Right ventricle myocardium superior (tissue), 1 donor: ENCODE measurements at regions of chr21 and their contacts with region 1.

Region 1: DNA sequence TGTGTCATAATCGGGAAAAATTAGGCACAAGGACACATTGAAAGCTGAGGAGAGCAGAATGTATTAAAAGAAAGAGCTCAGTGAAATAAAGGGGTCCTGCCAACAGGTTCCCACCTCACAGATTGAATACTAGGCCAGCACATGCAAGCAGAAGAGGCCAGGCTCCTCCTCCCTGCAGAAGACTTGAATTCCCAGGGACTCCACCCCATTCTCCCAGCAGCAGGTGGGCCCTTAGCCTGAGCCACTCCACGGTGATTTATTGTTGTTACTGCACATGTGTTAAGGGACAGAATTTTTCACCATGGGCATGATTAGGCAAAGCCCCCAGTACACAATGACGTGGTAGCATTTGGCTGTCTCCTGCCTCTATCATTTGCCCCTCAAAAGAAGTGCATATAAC is 1844.7 kb downstream of the NCAM2 start:
- DNase-seq: no peak
- ATAC-seq: no peak

Region 2: GRCh38 chr21:22827422-22827821 is 15.5 kb before region 1 on chr21:
- intact Hi-C with region 1: loop called (anchors 1 kb)
- DNase-seq: no peak
- ATAC-seq: no peak

Region 3: DNA sequence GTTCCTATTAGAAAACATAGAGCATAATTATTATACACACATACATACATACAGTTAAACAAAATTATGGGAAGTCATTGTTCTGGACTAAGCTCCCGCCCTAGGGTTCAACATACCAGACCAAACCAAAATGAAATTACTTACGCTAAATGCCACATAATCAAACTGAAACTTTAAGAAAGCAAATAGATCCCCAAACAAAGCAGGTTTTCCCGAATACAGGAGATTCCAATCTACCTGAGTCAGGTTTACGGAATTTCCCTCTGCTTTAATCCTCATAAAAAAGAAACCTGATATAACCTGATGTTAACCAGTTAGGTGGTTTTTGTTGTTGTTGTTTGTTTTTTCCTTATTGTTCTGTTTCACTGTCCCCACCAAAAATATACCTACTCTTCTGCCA is 42.2 kb after region 1 on chr21:
- intact Hi-C with region 1: no loop called
- DNase-seq: no peak
- ATAC-seq: no peak